ENCODE measurements at regions of chr5 and their contacts with region 1.

Region 1: DNA sequence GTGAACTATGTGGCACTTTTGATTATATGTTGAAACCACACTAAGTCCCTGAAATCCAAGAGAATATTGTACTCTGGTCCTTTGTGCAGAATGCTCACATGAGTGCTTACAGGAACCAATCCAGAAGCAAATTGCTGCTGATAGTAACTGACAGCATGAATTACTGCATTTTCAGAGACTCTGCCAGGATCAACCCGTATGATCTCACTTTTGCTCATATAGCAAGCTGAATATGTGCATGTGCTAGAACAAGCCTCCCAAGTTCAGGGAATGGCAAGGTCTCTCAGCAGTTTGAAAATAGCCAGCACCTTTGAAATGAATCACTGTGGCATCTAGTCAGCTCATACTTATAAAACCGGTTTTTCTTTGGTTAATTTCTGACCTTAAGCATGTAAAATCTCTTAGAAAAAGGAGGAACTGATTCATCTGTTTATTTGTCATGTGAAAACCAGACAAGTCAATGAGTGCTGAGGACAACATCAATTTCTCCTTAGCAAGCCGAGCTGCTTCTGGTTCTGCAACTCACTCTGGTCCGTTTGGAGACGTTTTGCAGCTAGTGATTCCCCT is 215.7 kb upstream of the ELL2 start:
- DNase-seq: peak; percentile 99
- H3K4me3 ChIP-seq: no peak overlapping the region
- H3K27ac ChIP-seq: peak overlapping the region; percentile 50
- H3K4me1 ChIP-seq: peaks cover 40% of the 10 kb centered on the region
- H3K27me3 ChIP-seq: no peaks in the 10 kb centered on the region
- CTCF ChIP-seq: no peak

Region 2: DNA sequence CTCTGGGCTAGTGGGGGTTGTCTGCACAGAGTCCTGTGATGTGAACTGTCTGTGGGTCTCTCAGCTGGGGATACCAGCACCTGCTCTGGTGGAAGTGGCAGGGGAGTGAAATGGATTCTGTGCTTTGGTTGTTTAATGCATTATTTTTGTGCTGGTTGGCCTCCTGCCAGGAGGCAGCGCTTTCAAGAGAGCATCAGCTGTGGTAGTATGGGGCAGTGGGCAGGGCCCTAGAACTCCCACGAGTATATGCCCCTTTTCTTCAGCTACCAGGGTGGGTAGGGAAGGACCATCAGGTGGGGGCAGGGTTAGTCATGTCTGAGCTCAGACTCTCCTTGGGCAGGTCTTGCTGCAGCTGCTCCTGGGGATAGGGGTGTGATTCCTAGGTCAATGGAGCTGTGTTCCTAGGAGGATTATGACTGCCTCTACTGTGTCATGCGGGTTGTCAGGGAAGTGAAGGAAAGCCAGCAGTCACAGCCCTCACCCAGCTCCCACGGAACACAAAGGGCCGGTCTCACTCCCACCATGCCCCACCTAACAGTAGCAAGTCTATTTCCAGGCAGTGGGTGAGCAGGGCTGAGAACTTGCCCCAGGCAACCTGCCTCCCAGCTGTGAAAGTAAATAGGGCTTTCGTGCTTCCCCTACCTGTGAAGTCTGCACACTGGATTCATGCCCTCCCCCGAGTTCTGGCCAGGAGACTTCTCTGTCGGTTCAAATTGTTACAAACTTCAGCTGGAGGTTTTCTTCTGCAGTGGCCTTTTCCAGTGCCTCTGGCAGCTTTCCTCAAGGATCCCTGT is 811.9 kb before region 1 on chr5:
- CTCF ChIA-PET with region 1: no interaction called
- dilution Hi-C with region 1: no loop called
- in situ Hi-C with region 1: no loop called
- intact Hi-C with region 1: no loop called
- DNase-seq: no peak
- H3K4me3 ChIP-seq: no peak overlapping the region
- H3K27ac ChIP-seq: no peak overlapping the region
- H3K4me1 ChIP-seq: no peaks in the 10 kb centered on the region
- H3K27me3 ChIP-seq: peaks cover 4% of the 10 kb centered on the region
- CTCF ChIP-seq: no peak

Region 3: DNA sequence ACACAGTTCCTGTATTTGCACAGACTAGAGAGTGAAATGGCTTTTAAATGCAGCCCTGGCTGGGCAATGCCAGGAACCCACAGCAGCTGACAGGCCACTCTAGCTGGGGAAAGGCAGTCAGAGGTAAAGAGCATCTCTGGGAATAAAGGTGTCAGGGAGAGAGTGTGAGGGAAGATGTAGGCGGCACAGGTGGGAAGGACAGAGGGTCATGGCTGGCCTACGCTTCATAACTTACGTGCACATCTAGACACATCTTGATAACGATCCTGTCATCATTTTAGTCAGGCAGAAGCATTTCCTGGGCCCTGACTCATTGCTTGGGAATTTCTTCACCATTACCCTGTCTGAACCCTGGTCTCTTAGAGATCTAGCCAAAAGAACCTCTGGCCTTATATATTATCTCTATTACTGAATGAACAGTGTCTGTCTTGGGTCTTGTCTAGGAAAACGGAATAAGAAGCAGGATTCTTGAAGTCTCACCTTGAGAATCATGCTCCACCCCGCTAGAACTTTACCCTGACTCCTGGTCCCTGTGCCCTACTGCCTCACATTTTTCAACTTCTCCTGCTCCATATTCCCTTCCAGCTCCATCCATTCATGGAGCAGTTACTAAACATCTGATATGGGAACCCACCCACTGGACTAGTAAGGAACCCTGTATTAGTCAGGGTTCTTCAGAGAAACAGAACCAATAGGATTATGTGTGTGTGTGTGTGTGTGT is 109.3 kb before region 1 on chr5:
- CTCF ChIA-PET with region 1: no interaction called
- dilution Hi-C with region 1: no loop called
- in situ Hi-C with region 1: no loop called
- intact Hi-C with region 1: loop called (anchors 2 kb)
- DNase-seq: peak; percentile 94
- H3K4me3 ChIP-seq: no peak overlapping the region
- H3K27ac ChIP-seq: peak overlapping the region; percentile 89
- H3K4me1 ChIP-seq: peaks cover 46% of the 10 kb centered on the region
- H3K27me3 ChIP-seq: no peaks in the 10 kb centered on the region
- CTCF ChIP-seq: no peak

Region 4: GRCh38 chr5:96113170-96113939 is 64.0 kb before region 1 on chr5:
- CTCF ChIA-PET with region 1: no interaction called
- dilution Hi-C with region 1: no loop called
- in situ Hi-C with region 1: no loop called
- intact Hi-C with region 1: loop called (anchors 1 kb)
- DNase-seq: peak; percentile 89
- H3K4me3 ChIP-seq: peak overlapping the region in 2 of 3 experiments; percentile 8
- H3K27ac ChIP-seq: peak overlapping the region; percentile 88
- H3K4me1 ChIP-seq: peaks cover 47% of the 10 kb centered on the region
- H3K27me3 ChIP-seq: no peaks in the 10 kb centered on the region
- CTCF ChIP-seq: no peak

Region 5: GRCh38 chr5:96157841-96158291 is 19.5 kb before region 1 on chr5:
- CTCF ChIA-PET with region 1: no interaction called
- dilution Hi-C with region 1: no loop called
- in situ Hi-C with region 1: no loop called
- intact Hi-C with region 1: loop called (anchors 2 kb)
- DNase-seq: peak; percentile 58
- H3K4me3 ChIP-seq: no peak overlapping the region
- H3K27ac ChIP-seq: peak overlapping the region; percentile 90
- H3K4me1 ChIP-seq: peaks cover 35% of the 10 kb centered on the region
- H3K27me3 ChIP-seq: no peaks in the 10 kb centered on the region
- CTCF ChIP-seq: no peak

Region 6: DNA sequence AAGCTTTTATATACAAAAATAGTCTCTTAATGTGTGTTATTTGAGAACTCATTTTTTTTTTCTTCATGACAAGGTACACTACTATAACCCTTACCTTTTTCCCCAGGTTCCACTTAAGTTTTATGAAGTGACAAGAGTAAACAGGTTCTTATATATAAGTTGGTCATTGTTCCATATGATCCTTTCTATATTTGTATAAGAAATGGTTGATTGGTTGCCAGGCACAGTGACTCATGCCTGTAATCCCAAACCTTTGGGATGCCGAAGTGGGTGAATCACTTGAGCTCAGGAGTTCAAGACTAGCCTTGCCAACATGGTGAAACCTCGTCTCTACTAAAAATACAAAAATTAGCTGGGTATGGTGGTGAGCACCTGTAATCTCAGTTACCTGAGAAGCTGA is 147.3 kb after region 1 on chr5:
- CTCF ChIA-PET with region 1: no interaction called
- dilution Hi-C with region 1: no loop called
- in situ Hi-C with region 1: no loop called
- intact Hi-C with region 1: loop called (anchors 2 kb)
- DNase-seq: peak; percentile 87
- H3K4me3 ChIP-seq: no peak overlapping the region
- H3K27ac ChIP-seq: peak overlapping the region; percentile 66
- H3K4me1 ChIP-seq: peaks cover 26% of the 10 kb centered on the region
- H3K27me3 ChIP-seq: no peaks in the 10 kb centered on the region
- CTCF ChIP-seq: no peak

Measured in mammary epithelial cell (primary cell).